Breast epithelium (tissue), 4 donors: ENCODE measurements at regions of chr2 and their contacts with region 1.

Region 1: GRCh38 chr2:214286011-214286410 is 124.8 kb upstream of the VWC2L start:
- DNase-seq: no peak
- H3K4me3 ChIP-seq: no peak overlapping the region
- H3K27ac ChIP-seq: no peak overlapping the region
- H3K4me1 ChIP-seq: no peaks in the 10 kb centered on the region
- H3K27me3 ChIP-seq: no peaks in the 10 kb centered on the region
- CTCF ChIP-seq: no peak
- POLR2A ChIP-seq: no peak

Region 2: DNA sequence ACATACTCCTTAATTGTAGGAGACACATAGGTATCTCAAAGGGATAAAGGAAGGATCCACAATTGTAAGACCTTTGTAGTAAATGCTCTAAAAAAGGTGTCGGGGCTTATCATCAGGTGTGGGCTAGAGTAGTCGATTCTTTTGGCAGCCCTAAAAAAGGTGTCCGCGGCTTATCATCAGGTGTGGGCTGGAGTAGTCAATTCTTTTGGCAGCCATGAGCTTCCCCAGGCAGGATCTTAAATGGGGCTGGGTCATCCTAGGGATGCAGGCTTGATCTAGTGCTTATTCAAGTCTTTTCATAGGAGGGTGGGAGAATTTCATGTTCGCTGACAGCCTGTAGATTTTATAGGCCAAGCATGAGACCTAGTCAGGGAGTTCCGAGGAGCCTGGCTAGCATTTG is 281.5 kb before region 1 on chr2:
- intact Hi-C with region 1: loop called (anchors 5 kb)
- DNase-seq: no peak
- H3K4me3 ChIP-seq: no peak overlapping the region
- H3K27ac ChIP-seq: no peak overlapping the region
- H3K4me1 ChIP-seq: no peaks in the 10 kb centered on the region
- H3K27me3 ChIP-seq: no peaks in the 10 kb centered on the region
- CTCF ChIP-seq: no peak
- POLR2A ChIP-seq: no peak